ENCODE measurements at regions of chr13 and their contacts with region 1.

Region 1: DNA sequence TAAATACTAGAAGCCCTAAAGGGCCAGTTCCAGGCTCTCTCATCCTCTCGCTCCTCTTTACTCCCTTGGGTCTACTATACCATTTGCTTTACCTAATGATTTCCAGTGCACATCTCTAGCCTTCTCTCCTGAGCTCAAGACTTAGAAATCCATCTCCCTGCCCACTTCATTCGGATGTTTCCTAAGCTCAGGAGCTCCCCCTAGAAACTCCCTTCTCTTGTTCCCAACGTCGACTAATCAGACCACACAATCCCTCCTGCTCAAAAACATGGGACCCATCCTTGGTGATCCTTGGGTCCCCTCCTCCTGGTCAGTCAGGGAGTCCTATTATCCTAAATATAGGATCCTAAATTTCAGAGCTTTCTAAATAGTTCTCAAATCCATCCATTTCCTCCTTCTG is 21.1 kb upstream of the STK24 start:
- DNase-seq: no peak
- ATAC-seq: no peak
- H3K4me3 ChIP-seq: no peak overlapping the region
- H3K4me1 ChIP-seq: no peaks in the 10 kb centered on the region
- CTCF ChIP-seq: no peak

Region 2: GRCh38 chr13:98368019-98368418 is 230.0 kb before region 1 on chr13:
- intact Hi-C with region 1: no loop called
- DNase-seq: no peak
- ATAC-seq: peak; percentile 33
- H3K4me3 ChIP-seq: no peak overlapping the region
- H3K4me1 ChIP-seq: no peaks in the 10 kb centered on the region
- CTCF ChIP-seq: no peak

Region 3: GRCh38 chr13:98648141-98648540 is 50.1 kb after region 1 on chr13:
- intact Hi-C with region 1: loop called in 1 of 2 experiments (anchors 10 kb)
- DNase-seq: peak in 1 of 3 donors; percentile 64
- ATAC-seq: peak; percentile 75
- H3K4me3 ChIP-seq: no peak overlapping the region
- H3K4me1 ChIP-seq: peaks cover 31% of the 10 kb centered on the region
- CTCF ChIP-seq: no peak

Region 4: DNA sequence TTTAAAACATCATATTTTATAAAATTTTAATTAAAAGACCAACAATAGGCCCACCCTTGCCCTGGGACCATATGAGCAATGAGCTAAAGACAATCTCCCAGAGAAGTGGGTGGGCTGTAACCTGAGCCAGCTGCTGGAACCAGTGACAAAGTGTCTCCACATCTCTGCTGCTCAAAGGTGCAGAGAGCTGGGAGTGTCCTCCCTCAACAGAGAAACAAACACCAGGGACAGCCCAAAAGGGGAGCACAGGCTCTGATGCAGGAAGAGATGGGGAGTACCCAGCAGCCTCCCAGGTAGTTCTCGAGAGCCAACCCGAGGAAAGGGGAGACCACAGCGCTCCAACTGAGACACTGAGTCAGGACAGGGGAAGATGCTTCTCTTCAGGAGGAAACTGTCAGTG is 340.8 kb after region 1 on chr13:
- intact Hi-C with region 1: no loop called
- DNase-seq: no peak
- ATAC-seq: no peak
- H3K4me3 ChIP-seq: no peak overlapping the region
- H3K4me1 ChIP-seq: no peaks in the 10 kb centered on the region
- CTCF ChIP-seq: no peak